ENCODE measurements at regions of chr1 and their contacts with region 1.

Region 1: DNA sequence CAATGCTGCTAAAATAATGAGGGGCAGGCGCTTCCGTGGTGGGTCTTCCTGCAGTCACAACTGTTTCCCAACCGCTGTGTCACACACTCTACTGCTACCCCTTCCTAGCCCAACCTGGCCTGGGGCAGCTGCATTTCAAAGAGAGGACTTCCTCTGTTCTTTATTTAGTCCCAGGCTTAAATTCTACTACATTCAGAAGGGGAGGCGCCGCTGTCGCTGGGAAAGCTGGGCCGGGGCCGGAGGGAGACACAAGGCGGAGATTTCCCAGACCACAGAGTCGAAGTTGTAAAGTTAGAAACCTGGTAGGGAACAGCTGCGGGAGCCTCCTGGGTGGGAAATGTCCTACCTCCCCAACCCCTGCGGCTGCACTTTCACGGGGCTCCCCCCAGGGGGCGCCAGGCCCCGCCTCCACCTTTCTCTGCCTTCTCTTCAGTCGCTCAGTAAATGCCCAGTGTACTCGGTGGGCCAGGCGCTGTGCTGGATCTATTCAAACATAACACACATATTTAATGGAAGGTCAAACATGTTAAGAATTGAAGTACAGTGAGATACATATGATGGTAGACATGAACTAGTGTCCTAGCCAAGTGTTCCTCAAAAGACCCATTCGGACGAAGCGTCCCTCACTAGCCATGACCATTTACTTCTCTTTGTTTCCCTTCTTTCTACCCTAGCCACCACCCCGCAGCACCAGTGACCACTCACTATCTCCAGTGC is 23.1 kb downstream of the DYRK3 start:
- DNase-seq: peak; percentile 28 to 59 (median 45)
- H3K4me3 ChIP-seq: no peak overlapping the region
- H3K4me3 Mint-ChIP-seq: no peak overlapping the region
- H3K27ac ChIP-seq: no peak overlapping the region
- H3K27ac Mint-ChIP-seq: peak overlapping the region in 2 of 8 donors; percentile 43 to 63
- H3K4me1 ChIP-seq: peaks cover 4% of the 10 kb centered on the region
- H3K4me1 Mint-ChIP-seq: peaks cover 3 to 11% (median 6%) of the 10 kb centered on the region in 3 donors
- H3K27me3 ChIP-seq: peaks cover 7% of the 10 kb centered on the region
- H3K27me3 Mint-ChIP-seq: peaks cover 23 to 41% of the 10 kb centered on the region in 2 donors

Region 2: GRCh38 chr1:206635080-206635977 is 23.1 kb before region 1 on chr1 and contains the start of gene DYRK3:
- CTCF ChIA-PET with region 1: interaction called, 108 read pairs
- POLR2A ChIA-PET with region 1: interaction called, 5 read pairs
- DNase-seq: peak; percentile 84 to 94 (median 87)
- H3K4me3 ChIP-seq: peak within 1 kb of the TSS; percentile 62
- H3K4me3 Mint-ChIP-seq: peak within 1 kb of the TSS; percentile 85 to 96 (median 89)
- H3K27ac ChIP-seq: peak within 1 kb of the TSS; percentile 59
- H3K27ac Mint-ChIP-seq: peak within 1 kb of the TSS; percentile 61 to 95 (median 90)
- H3K4me1 ChIP-seq: peaks cover 13% of the 10 kb centered on the region
- H3K4me1 Mint-ChIP-seq: peaks cover 13 to 27% (median 18%) of the 10 kb centered on the region in 3 donors
- H3K27me3 ChIP-seq: no peaks in the 10 kb centered on the region
- H3K27me3 Mint-ChIP-seq: peaks cover 10 to 13% of the 10 kb centered on the region in 2 donors
- total RNA-seq, gene DYRK3: 11.0 to 11.7 TPM

Region 3: DNA sequence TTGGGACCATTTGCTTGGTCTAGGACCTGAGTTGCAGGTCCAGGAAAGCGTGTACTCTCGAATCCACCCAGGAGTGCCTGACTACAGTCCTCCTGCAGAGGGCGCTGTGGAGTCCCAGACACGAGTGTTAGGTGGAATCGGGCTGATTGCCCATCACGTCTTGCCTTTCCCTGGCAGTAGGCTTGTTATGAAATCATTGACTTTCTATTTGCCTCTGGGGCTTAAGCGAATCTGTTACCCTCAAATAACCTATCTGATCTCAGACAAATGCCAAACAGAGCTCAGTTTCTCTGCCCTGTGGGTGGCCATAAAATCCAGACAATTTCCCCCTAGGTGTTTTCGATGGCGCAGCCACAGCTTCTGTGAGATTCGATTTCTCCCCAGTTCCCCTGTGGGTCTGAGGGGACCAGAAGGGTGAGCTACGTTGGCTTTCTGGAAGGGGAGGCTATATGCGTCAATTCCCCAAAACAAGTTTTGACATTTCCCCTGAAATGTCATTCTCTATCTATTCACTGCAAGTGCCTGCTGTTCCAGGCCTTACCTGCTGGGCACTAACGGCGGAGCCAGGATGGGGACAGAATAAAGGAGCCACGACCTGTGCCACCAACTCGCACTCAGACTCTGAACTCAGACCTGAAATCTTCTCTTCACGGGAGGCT is 206.7 kb after region 1 on chr1 and contains the start of gene IL20:
- CTCF ChIA-PET with region 1: no interaction called
- POLR2A ChIA-PET with region 1: no interaction called
- DNase-seq: peak; percentile 67 to 87 (median 79)
- H3K4me3 ChIP-seq: no peak within 1 kb of the TSS
- H3K4me3 Mint-ChIP-seq: no peak within 1 kb of the TSS
- H3K27ac ChIP-seq: no peak within 1 kb of the TSS
- H3K27ac Mint-ChIP-seq: no peak within 1 kb of the TSS
- H3K4me1 ChIP-seq: no peaks in the 10 kb centered on the region
- H3K4me1 Mint-ChIP-seq: peaks cover 0 to 5% (median 2%) of the 10 kb centered on the region in 3 donors
- H3K27me3 ChIP-seq: no peaks in the 10 kb centered on the region
- H3K27me3 Mint-ChIP-seq: peaks cover 17 to 25% of the 10 kb centered on the region in 2 donors
- total RNA-seq, gene IL20: not detected

Region 4: DNA sequence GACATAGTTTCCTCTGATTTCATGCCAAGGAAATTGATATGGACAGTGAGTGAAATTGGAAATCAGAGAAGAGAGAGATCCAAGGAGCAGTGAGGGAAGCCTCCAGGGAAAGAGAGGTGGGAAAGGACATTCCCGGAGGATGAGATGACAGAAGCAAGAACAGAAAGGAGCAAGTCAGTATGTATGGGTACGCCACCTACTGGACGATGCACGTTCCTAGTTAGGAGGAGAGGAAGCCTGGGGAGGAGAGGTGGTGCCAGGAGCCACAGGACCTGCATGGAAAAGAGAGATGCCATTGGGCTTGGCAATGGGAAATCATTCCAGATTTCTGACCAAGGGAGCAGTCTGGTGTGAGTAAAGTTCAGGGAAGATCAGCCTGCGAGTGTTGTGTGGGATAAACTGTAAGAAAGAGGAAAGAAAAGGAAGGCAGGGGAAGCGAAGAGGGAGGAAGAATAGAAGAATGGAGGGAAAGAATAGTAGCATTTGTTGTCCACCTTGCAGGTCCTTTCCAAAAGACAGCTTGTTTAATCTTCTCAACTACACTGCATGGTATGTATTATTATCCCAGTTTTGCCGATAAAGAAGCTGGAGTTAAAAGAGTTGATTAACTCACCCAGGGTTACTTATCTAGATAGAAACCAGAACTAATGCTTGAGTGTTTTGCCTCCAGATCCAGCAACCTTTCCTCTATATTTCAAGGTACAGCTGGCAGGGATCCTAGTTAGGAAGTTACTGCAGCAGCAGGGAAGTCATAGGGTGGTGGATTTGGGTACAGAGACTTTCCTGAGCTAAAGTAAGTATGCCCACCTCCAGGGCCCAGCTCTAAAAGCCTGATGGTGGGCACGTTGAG is 346.8 kb after region 1 on chr1:
- CTCF ChIA-PET with region 1: no interaction called
- POLR2A ChIA-PET with region 1: no interaction called
- DNase-seq: peak; percentile 3 to 50 (median 8)
- H3K4me3 ChIP-seq: no peak overlapping the region
- H3K4me3 Mint-ChIP-seq: peak overlapping the region in 2 of 7 donors; percentile 19 to 64
- H3K27ac ChIP-seq: no peak overlapping the region
- H3K27ac Mint-ChIP-seq: no peak overlapping the region
- H3K4me1 ChIP-seq: no peaks in the 10 kb centered on the region
- H3K4me1 Mint-ChIP-seq: peaks cover 0 to 6% (median 4%) of the 10 kb centered on the region in 3 donors
- H3K27me3 ChIP-seq: no peaks in the 10 kb centered on the region
- H3K27me3 Mint-ChIP-seq: peaks cover 14 to 27% of the 10 kb centered on the region in 2 donors

Measured in CD8-positive, alpha-beta memory T cell (primary cell).